Sciatic nerve (tissue), 2 donors: ENCODE measurements at regions of chr1 and their contacts with region 1.

Region 1: DNA sequence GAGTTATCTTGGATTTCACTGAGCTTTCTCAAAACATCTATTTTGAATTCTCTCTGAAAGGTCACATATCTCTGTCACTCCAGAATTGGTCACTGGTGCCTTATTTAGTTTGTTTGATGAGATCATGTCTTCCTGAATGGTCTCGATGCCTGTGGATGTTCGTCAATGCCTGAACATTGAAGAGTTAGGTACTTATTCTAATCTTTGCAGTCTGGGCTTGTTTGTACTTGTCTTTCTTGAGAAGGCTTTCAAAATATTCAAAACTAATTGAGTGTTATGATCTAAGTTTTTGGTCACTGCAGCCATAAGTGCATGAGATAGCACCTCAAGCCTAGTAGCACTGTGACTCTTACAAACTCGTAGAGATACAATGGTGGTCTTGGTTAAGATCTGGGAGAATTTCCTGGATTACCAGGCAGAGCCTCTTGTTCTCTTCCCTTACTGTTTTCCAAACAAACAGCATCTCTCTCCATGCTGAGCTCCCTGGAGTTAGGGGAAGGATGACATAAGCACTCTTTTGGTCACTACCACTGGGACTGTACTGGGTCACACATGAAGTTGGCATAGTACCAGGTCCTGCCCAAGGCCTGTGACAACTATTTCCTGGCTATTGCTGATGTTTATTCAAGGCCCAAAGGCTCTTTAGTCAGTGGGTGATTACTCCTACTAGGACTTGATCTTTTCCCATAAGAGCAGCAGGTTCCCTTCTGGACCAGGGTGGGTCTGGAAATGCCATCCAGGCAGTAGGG is 25.6 kb downstream of the SLC22A15 start:
- DNase-seq: no peak
- ATAC-seq: no peak

Region 2: GRCh38 chr1:116012716-116013115 is 10.8 kb after region 1 on chr1:
- intact Hi-C with region 1: loop called (anchors 2 kb)
- DNase-seq: no peak
- ATAC-seq: no peak